Activated T-helper 2 cell treated with anti-CD3 and anti-CD28 coated beads, Interferon-gamma antibody, Interleukin-2, Interleukin-4, amounts not matched to agents 10 μg/mL and 5 μg/mL and 100 μg/mL, durations not matched to agents 14 hours and 24 hours and 36 hours (primary cell): ENCODE measurements at regions of chr9 and their contacts with region 1.

Region 1: GRCh38 chr9:112898872-112899311 is 8.2 kb upstream of the SLC46A2 start:
- DNase-seq: no peak
- H3K4me3 Mint-ChIP-seq: no peak overlapping the region
- H3K27ac Mint-ChIP-seq: no peak overlapping the region
- H3K4me1 Mint-ChIP-seq: peaks cover 28% of the 10 kb centered on the region
- H3K27me3 Mint-ChIP-seq: peaks cover 37% of the 10 kb centered on the region

Region 2: DNA sequence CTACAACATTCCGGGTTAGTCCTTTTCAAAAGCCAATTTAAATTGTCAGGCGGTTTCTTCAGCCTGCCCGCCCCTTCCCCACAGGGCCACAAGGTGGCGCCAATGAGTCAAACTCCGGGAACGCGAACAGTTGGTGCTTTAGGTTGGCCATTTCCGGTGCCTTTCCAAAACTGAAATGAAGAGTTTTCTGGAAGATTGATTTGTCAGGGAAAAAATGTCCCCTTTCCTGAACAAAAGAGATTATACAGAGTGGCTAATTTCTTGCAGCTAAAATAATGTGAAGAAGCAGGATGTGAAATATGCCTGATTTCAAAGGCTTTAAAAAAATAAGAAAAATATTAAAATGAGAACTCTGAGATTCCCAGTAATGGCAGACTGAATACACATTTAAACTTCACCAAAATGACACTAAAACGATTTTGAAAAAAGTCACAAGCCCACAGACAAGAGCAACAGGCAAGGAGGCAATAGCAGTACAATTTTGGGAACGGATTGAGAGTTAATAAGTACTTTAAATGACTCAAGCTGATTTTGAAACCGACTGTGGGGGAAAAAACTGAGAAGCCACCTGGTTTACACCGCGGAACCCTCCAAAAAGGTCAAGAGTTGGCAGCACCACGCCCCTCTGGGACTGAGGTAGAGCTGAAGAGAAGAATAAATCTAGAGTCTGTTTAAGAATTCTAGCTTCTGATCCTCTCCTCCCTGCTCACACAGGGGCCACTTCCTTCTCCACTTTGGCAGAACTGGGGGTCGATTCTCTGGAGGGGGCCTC is 53.9 kb before region 1 on chr9:
- intact Hi-C with region 1: loop called (anchors 1 kb)
- DNase-seq: peak; percentile 62
- H3K4me3 Mint-ChIP-seq: no peak overlapping the region
- H3K27ac Mint-ChIP-seq: no peak overlapping the region
- H3K4me1 Mint-ChIP-seq: peaks cover 12% of the 10 kb centered on the region
- H3K27me3 Mint-ChIP-seq: no peaks in the 10 kb centered on the region